HEK293 (cell line): ENCODE measurements at regions of chr1 and their contacts with region 1.

Region 1: GRCh38 chr1:168439456-168440375 is 104.1 kb downstream of the XCL2 start:
- H3K4me3 ChIP-seq: peak overlapping the region; percentile 3; the same call in 1 of the 2 replicates
- H3K27ac ChIP-seq: no peak overlapping the region
- H3K4me1 ChIP-seq: no peaks in the 10 kb centered on the region
- CTCF ChIP-seq: peak; percentile 86

Region 2: DNA sequence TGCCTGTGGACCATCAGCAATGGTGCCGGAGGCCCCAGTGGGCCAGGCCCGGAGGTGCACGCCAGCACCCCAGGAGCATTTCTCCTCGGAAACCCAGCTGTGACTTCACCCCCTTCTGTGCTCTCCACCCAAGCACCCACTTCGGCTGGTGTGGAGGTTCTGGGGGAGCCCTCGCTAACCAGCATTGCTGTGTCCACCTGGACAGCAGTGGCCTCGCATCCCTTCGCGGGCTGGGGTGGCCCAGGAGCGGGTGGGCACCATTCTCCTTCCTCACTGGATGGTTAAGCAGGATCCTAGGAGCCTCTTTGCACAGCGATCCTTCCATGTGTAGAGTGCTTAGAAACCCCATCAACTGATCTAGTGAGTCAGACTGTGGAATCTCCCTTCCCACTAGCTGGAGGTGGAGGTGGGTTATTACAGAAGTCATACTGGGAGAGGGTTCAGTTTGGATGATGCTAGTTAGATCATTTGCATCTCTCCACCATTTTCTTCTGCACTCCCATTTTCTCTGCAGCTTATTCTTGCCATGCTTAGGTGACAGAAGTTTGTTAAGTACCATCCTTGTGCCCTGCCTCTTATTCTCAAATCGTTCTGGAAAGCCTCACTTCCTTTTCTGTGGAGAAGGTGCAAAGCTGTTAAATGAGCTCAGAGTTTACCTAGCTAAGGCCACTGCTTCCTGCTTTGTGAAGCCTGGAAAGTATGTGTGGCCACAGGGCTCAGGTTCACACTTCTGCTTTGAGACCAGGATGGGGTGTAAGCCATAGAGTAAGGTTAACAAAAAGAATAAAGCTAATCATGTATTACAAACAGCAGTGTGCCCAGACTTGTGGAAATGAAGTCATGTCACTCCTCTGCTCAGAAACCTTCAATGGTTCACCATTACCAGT is 126.8 kb before region 1 on chr1:
- CTCF ChIA-PET with region 1: no interaction called
- POLR2A ChIA-PET with region 1: no interaction called
- H3K4me3 ChIP-seq: no peak overlapping the region
- H3K27ac ChIP-seq: no peak overlapping the region
- H3K4me1 ChIP-seq: no peaks in the 10 kb centered on the region
- CTCF ChIP-seq: no peak

Region 3: DNA sequence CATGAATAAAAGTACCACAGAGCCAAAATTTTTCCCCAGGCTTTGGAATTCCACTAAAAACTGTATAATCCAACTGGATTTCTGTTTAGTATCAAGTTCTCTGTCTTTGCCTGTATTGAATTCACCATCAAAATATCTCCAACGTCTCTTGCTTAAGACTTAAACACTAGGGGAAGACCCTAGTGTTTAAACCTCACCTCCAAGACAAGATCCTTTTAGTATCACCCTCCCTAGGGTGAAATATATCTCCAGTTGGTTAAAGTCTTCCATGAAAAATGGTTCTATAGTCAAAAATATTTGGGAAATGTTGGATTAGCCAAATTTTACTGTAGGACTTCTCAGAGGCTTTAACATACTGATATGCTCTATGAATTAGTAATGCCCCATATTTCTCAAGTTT is 128.6 kb after region 1 on chr1:
- CTCF ChIA-PET with region 1: interaction called, 11 read pairs
- POLR2A ChIA-PET with region 1: no interaction called
- H3K4me3 ChIP-seq: no peak overlapping the region
- H3K27ac ChIP-seq: no peak overlapping the region
- H3K4me1 ChIP-seq: peaks cover 16% of the 10 kb centered on the region
- CTCF ChIP-seq: no peak

Region 4: DNA sequence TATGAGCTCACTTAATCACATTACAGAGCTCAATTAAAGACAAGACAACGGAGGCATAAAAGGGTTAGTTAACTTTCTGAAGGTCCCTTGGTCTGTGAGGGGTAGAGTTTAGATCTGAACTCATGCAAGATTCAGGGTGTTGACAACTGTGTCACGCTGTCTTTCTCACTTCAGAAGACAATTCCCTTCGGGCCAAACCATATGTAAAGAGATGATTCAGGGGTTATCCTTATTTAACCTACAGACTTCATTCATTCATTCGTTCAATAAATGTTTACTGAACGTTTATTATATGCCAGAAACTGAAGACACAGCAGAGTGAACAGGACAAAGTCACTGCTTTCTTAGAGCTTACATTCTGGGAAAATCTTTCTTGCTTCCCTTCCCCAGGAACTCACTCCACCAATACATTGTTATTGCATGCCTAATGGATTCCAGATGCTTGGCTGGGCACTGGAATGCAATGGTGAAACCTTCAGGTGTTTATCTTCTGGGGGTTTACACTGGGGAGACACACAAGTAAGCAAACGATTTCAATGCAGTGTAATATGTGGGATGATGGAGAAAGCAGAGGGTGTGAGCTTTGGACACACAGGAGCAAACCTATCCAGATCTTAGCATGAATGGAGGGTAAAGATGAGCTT is 143.1 kb after region 1 on chr1:
- CTCF ChIA-PET with region 1: interaction called, 13 read pairs
- POLR2A ChIA-PET with region 1: no interaction called
- H3K4me3 ChIP-seq: no peak overlapping the region
- H3K27ac ChIP-seq: no peak overlapping the region
- H3K4me1 ChIP-seq: peaks cover 3% of the 10 kb centered on the region; the same call in 1 of the 2 replicates
- CTCF ChIP-seq: no peak

Region 5: GRCh38 chr1:168603501-168604110 is 163.9 kb after region 1 on chr1:
- CTCF ChIA-PET with region 1: interaction called, 29 read pairs
- POLR2A ChIA-PET with region 1: interaction called, 3 read pairs
- H3K4me3 ChIP-seq: no peak overlapping the region
- H3K27ac ChIP-seq: no peak overlapping the region
- H3K4me1 ChIP-seq: no peaks in the 10 kb centered on the region
- CTCF ChIP-seq: peak; percentile 86

Region 6: GRCh38 chr1:169348383-169349036 is 908.8 kb after region 1 on chr1:
- CTCF ChIA-PET with region 1: interaction called, 13 read pairs
- POLR2A ChIA-PET with region 1: no interaction called
- H3K4me3 ChIP-seq: no peak overlapping the region
- H3K27ac ChIP-seq: no peak overlapping the region
- H3K4me1 ChIP-seq: no peaks in the 10 kb centered on the region
- CTCF ChIP-seq: peak; percentile 51; the same call in 1 of the 2 replicates